Thyroid gland (tissue), 4 donors: ENCODE measurements at regions of chr22 and their contacts with region 1.

Region 1: DNA sequence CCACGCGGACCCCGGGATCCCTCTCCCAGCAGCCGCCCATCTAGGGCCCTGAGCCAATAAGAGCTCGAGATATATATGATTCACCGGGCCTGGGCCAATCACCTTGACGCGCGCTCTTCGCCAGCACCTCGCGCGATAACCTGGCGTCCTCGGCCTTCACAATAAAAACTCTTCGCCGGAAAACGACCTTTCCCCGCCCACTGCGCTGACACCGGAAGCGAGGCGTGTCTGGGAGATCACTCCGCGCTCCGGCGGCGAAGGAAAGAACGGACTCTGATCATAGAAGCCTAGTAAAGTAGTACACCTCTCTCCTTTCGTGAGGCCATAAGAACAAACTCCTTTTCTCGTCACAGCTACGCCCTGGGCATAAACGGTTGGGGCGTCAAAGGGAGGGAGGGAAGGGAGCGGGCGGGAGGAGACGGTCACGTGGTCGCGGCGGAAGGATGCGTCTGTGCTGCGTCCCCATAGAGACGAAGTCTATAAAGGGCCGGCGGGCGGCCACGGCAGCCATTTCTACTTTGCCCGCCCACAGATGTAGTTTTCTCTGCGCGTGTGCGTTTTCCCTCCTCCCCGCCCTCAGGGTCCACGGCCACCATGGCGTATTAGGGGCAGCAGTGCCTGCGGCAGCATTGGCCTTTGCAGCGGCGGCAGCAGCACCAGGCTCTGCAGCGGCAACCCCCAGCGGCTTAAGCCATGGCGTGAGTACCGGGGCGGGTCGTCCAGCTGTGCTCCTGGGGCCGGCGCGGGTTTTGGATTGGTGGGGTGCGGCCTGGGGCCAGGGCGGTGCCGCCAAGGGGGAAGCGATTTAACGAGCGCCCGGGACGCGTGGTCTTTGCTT is at the start of gene ATF4:
- DNase-seq: peak; percentile 99
- H3K4me3 ChIP-seq: peak within 1 kb of the TSS; percentile 98 to 100 (median 99)
- H3K27ac ChIP-seq: peak within 1 kb of the TSS; percentile 99
- H3K4me1 ChIP-seq: peaks cover 28 to 44% of the 10 kb centered on the region in 2 donors
- H3K27me3 ChIP-seq: no peaks in the 10 kb centered on the region
- CTCF ChIP-seq: no peak
- POLR2A ChIP-seq: peak; percentile 88 to 96
- total RNA-seq, gene ATF4: 173 to 273 (median 210) TPM

Region 2: DNA sequence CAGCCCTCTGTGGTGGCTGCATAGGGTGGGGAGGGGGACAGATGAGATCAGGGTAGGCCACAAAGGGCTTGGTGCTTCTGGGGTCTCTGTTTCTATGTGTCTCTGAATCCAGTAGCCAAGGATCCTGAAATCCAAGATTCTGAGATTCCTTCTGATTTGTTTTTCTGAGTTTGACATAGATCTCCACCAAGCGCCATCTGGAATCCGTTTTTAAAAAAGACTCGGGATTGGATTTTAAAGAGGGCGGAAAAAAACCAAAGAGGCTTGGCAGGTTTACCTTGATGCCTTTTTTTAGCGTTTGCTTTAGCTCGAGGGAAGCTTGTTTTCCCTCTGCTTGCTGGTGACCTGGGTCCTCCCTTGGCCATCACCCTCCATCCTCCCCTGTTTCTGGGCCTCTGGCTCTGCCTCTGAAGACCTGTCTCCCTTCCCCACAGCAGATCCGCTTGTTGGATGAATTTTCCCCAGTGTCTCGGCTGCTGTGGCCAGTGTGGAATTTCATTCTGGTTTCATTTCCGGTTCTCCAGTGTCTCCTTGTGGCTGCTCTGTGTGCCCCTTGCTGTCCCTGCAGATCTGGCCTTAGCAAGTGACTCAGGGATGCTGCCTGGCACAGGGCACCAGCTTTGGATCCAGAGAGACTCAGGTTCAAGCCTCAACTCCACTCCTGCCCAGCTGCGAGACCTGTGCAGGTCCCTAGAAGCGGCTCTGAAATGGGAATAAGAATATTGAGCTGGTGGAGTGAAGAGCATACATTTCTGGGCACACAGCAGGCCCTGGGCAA is 155.4 kb before region 1 on chr22:
- intact Hi-C with region 1: no loop called
- DNase-seq: no peak
- H3K4me3 ChIP-seq: no peak overlapping the region
- H3K27ac ChIP-seq: no peak overlapping the region
- H3K4me1 ChIP-seq: peaks cover 0 to 5% of the 10 kb centered on the region in 2 donors
- H3K27me3 ChIP-seq: no peaks in the 10 kb centered on the region
- CTCF ChIP-seq: no peak
- POLR2A ChIP-seq: no peak

Region 3: DNA sequence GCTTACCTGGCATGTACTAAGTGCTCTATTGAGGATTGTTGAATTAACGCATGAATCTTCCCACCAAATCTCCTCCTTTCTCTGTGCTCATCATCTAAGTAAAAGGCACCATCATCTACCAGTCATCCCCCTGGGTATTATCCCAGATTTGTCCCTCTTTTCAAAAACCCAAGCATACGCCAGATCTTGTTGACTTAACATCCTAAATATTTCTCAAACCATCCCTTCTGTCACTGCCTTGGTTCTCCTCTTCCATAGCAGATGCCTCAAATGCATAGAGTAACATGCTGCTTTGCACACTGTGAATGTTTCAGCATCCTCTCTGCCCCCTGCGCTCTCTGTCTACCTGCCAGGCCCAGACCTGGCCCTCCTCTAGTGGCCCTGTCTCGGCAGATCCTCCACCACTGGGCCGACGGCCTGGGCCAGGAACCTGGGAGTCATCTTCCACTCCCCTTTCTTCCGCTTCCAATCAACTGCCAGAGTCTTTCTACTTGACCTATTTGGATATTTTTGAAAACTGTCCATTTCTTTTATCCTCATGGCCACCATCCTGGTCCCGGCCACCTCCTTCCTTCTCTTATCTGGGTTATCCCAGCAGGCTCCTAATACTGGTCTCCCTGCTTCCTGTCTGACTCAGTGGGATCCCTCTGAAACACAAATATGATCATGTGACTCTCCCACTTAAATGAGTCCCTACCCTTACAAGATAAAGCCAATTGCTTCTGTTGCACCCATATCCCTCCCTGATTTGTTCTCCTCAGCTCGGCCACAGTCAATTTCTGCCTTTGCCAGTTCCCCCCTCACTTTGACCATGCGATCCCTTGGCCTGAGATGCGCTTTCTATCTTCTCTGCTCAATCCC is 124.1 kb before region 1 on chr22:
- intact Hi-C with region 1: loop called (anchors 5 kb)
- DNase-seq: no peak
- H3K4me3 ChIP-seq: no peak overlapping the region
- H3K27ac ChIP-seq: no peak overlapping the region
- H3K4me1 ChIP-seq: peaks cover 6 to 8% of the 10 kb centered on the region in 2 donors
- H3K27me3 ChIP-seq: no peaks in the 10 kb centered on the region
- CTCF ChIP-seq: no peak
- POLR2A ChIP-seq: no peak

Region 4: GRCh38 chr22:39502109-39502788 is 18.0 kb before region 1 on chr22 and contains the start of gene MIEF1:
- intact Hi-C with region 1: loop called (anchors 2 kb)
- DNase-seq: peak; percentile 98
- H3K4me3 ChIP-seq: peak within 1 kb of the TSS; percentile 54 to 90 (median 83)
- H3K27ac ChIP-seq: peak within 1 kb of the TSS; percentile 82 to 94 (median 89)
- H3K4me1 ChIP-seq: peaks cover 22 to 32% of the 10 kb centered on the region in 2 donors
- H3K27me3 ChIP-seq: no peaks in the 10 kb centered on the region
- CTCF ChIP-seq: no peak
- POLR2A ChIP-seq: peak in 1 of 2 donors; percentile 62
- total RNA-seq, gene MIEF1: 21.4 to 30.5 (median 26.7) TPM

Region 5: GRCh38 chr22:39674536-39674935 is 154.3 kb after region 1 on chr22:
- intact Hi-C with region 1: no loop called
- DNase-seq: no peak
- H3K4me3 ChIP-seq: no peak overlapping the region
- H3K27ac ChIP-seq: no peak overlapping the region
- H3K4me1 ChIP-seq: no peaks in the 10 kb centered on the region
- H3K27me3 ChIP-seq: no peaks in the 10 kb centered on the region
- CTCF ChIP-seq: no peak
- POLR2A ChIP-seq: no peak